ENCODE measurements at regions of chr17 and their contacts with region 1.

Region 1: DNA sequence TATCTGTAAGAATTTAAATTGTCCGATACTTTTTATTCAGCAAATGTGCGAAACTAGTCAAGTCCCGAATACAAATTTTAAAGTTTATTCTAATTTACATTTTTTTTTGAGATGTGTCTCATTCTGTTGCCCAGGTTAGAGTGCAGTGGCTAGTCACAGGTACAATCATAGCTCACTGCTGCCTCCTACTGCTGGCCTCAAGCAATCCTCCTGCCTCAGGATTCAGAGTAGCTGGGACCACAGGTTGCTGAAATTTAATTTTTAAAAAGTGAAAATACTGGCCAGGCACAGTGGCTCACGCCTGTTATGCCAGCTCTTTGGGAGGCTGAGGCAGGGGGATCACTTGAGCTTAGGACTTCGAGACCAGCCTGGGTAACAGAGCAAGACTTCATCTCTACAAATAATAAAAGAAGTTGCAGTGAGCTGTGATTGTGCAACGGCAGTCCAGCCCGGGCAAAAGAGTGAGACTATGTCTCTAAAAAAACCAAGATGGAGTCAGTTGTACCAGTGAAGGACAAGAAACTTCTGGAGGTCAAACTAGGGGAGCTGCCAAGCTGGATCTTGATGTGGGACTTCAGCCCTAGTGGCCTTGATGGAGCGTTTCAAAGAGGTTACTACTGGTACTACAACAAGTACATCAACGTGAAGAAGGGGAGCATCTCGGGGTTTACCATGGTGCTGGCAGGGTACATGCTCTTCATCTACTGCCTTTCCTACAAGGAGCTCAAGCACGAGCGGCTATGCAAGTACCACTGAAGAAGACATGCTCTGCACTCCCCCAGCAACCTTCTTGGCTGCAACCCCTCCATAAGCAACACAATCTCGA is 5.6 kb downstream of the POLG2 start:
- DNase-seq: peak; percentile 73
- H3K4me3 Mint-ChIP-seq: no peak overlapping the region
- H3K27ac Mint-ChIP-seq: no peak overlapping the region
- H3K4me1 Mint-ChIP-seq: peaks cover 42% of the 10 kb centered on the region
- H3K27me3 Mint-ChIP-seq: no peaks in the 10 kb centered on the region

Region 2: GRCh38 chr17:64401941-64402340 is 89.3 kb before region 1 on chr17:
- CTCF ChIA-PET with region 1: no interaction called
- POLR2A ChIA-PET with region 1: no interaction called
- DNase-seq: no peak
- H3K4me3 Mint-ChIP-seq: no peak overlapping the region
- H3K27ac Mint-ChIP-seq: peak overlapping the region; percentile 32
- H3K4me1 Mint-ChIP-seq: peaks cover 17% of the 10 kb centered on the region
- H3K27me3 Mint-ChIP-seq: no peaks in the 10 kb centered on the region

Region 3: GRCh38 chr17:64426568-64426967 is 64.7 kb before region 1 on chr17:
- CTCF ChIA-PET with region 1: interaction called, 341 read pairs
- POLR2A ChIA-PET with region 1: interaction called, 38 read pairs
- DNase-seq: no peak
- H3K4me3 Mint-ChIP-seq: no peak overlapping the region
- H3K27ac Mint-ChIP-seq: no peak overlapping the region
- H3K4me1 Mint-ChIP-seq: no peaks in the 10 kb centered on the region
- H3K27me3 Mint-ChIP-seq: peaks cover 23% of the 10 kb centered on the region

Region 4: GRCh38 chr17:64479650-64480049 is 11.6 kb before region 1 on chr17:
- CTCF ChIA-PET with region 1: interaction called, 47 read pairs
- POLR2A ChIA-PET with region 1: interaction called, 7 read pairs
- DNase-seq: no peak
- H3K4me3 Mint-ChIP-seq: no peak overlapping the region
- H3K27ac Mint-ChIP-seq: no peak overlapping the region
- H3K4me1 Mint-ChIP-seq: peaks cover 7% of the 10 kb centered on the region
- H3K27me3 Mint-ChIP-seq: no peaks in the 10 kb centered on the region

Measured in activated CD4-positive, alpha-beta memory T cell treated with anti-CD3 and anti-CD28 coated beads, Interleukin-2, amount 10 ng/mL, durations not matched to agents 7 days and 5 days (primary cell).